ENCODE measurements at regions of chr15 and their contacts with region 1.

Region 1: GRCh38 chr15:41919954-41920538 is 26.2 kb upstream of the SPTBN5 start:
- DNase-seq: no peak
- H3K4me3 Mint-ChIP-seq: no peak overlapping the region
- H3K27ac Mint-ChIP-seq: no peak overlapping the region
- H3K4me1 Mint-ChIP-seq: peaks cover 5% of the 10 kb centered on the region
- H3K27me3 Mint-ChIP-seq: no peaks in the 10 kb centered on the region

Region 2: GRCh38 chr15:41944313-41944940 is 24.4 kb after region 1 on chr15:
- CTCF ChIA-PET with region 1: no interaction called
- POLR2A ChIA-PET with region 1: no interaction called
- intact Hi-C with region 1: loop called (anchors 1 kb)
- DNase-seq: no peak
- H3K4me3 Mint-ChIP-seq: no peak overlapping the region
- H3K27ac Mint-ChIP-seq: peak overlapping the region; percentile 38
- H3K4me1 Mint-ChIP-seq: peaks cover 32% of the 10 kb centered on the region
- H3K27me3 Mint-ChIP-seq: no peaks in the 10 kb centered on the region